Mammary epithelial cell (primary cell): ENCODE measurements at regions of chr4 and their contacts with region 1.

Region 1: DNA sequence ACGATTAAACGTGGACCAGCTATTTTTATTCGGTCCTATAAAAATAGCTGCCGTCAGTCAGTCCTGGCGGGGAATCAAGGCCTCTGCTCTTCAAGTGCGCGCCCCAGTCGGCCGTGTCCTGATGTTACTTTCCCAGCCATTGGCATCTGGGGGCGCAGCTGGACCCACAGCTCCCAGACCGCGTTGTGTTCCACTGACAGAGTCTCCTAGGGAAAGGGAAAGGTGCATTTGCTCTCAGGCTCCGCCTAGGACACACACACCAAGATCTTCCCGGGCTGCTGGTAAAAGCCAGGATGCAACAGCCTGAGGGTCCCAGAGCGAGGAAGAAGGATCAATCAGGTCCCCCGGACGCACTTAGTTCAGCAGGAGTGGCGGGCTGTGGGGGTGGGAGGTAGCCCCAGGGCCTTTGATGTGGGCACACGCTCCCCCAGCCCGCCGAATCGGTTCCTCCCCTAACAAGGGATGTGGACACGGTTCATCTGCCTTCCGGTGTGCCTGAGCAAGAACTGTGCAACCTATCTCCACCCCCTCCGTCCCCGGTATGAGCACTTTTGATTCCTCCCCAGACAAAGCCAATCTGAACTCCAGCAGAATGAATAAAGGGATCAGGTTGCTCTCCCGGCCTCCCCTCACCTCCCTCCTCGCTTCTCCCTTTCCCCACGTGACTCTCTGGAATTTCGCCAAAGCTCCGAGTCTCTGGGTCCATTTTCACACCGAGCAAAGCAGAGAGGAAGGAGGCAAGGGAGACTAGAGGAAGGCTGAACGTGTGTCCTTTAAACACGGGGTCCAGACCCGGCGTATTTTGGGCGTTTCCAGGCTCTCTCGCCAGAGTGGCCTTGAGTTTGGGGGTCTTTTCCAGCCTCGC is 626 bp upstream of the FRAS1 start:
- DNase-seq: peak; percentile 83
- H3K4me3 ChIP-seq: peak overlapping the region; percentile 73 to 81 (median 76)
- H3K27ac ChIP-seq: peak overlapping the region; percentile 34
- H3K4me1 ChIP-seq: peaks cover 6% of the 10 kb centered on the region
- H3K27me3 ChIP-seq: no peaks in the 10 kb centered on the region
- CTCF ChIP-seq: peak in 1 of 2 donors; percentile 8

Region 2: GRCh38 chr4:77852892-77853495 is 203.5 kb before region 1 on chr4:
- CTCF ChIA-PET with region 1: no interaction called
- dilution Hi-C with region 1: no loop called
- in situ Hi-C with region 1: no loop called
- intact Hi-C with region 1: no loop called
- DNase-seq: no peak
- H3K4me3 ChIP-seq: no peak overlapping the region
- H3K27ac ChIP-seq: no peak overlapping the region
- H3K4me1 ChIP-seq: no peaks in the 10 kb centered on the region
- H3K27me3 ChIP-seq: no peaks in the 10 kb centered on the region
- CTCF ChIP-seq: no peak

Region 3: DNA sequence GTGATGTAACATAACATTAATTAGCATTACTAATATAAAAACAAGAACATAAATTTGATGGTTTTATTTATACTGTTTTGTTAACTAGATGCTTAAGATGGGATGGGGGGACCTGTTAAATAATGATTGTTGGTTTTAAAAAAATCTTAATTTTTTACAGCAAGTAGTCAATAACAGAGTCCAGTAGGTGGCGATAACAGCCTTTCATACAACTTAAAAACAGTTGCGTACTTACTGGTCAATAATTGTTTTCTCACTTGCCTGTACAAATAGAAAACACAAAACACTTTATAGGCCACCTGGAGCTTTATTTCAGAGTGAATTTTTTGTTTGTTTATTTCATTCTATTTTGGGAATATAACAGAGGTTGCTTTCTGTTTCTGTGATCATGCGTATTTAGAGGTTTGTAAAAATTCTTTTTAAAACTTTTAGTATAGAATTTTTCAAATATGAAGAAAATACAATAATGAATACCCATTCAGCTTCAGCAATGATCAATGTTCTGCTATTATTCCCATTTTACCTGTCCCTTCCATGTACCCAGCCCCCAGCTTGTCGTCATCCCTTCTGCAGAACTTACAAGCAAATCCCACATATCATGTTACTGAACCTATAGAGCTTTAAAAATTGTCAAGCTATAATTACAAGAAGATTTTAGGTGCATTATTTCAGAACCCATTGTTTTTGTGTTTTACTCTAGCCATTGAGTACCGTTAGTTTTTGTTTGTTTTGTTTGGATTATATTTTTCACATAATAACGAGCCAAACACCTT is 96.7 kb before region 1 on chr4:
- CTCF ChIA-PET with region 1: no interaction called
- dilution Hi-C with region 1: no loop called
- in situ Hi-C with region 1: no loop called
- intact Hi-C with region 1: loop called (anchors 2 kb)
- DNase-seq: peak; percentile 25
- H3K4me3 ChIP-seq: no peak overlapping the region
- H3K27ac ChIP-seq: no peak overlapping the region
- H3K4me1 ChIP-seq: no peaks in the 10 kb centered on the region
- H3K27me3 ChIP-seq: no peaks in the 10 kb centered on the region
- CTCF ChIP-seq: peak; percentile 50 to 58

Region 4: DNA sequence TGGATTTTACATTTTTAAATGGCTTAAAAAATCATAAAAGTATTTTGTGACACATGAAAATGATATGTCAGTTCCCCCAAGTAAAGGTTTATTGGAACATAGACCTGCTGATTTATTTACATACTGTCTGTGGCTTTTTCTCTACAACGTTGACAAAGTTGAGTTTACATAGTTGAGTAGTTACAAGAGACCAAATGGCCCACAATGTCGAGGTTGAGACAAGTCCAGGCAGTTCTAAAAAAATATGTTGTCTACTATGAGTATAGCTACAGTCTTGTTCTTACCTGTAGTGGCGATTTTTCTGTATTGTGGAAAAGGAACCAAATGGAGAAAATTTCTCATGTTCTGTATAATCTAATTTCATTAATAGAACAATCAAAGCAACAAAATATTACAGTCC is 163.8 kb after region 1 on chr4:
- CTCF ChIA-PET with region 1: no interaction called
- dilution Hi-C with region 1: no loop called
- in situ Hi-C with region 1: no loop called
- intact Hi-C with region 1: loop called (anchors 2 kb)
- DNase-seq: peak; percentile 87
- H3K4me3 ChIP-seq: peak overlapping the region in 2 of 3 experiments; percentile 13 to 21
- H3K27ac ChIP-seq: peak overlapping the region; percentile 29
- H3K4me1 ChIP-seq: peaks cover 14% of the 10 kb centered on the region
- H3K27me3 ChIP-seq: no peaks in the 10 kb centered on the region
- CTCF ChIP-seq: no peak

Region 5: DNA sequence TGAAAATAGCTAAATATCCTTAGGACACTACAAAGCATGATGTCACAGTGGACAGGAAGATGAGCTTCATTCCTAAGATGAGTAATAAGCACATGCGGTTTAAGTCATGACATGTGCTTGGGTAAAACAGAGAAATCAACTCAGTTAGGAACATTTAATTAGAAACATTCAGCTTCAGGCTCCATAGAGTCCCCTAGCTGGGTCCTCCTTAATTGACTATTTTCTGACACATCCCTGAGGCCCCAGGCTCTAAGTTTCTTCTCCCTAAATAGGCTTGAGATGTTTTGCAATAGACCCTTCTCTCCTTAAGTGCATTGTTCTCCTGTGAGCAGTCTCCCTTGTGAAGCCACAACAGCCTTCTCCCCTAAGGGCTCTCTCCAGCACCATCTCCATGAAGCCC is 424.7 kb after region 1 on chr4:
- CTCF ChIA-PET with region 1: interaction called, 4 read pairs
- dilution Hi-C with region 1: no loop called
- in situ Hi-C with region 1: no loop called
- intact Hi-C with region 1: loop called (anchors 1 kb)
- DNase-seq: peak; percentile 75
- H3K4me3 ChIP-seq: no peak overlapping the region
- H3K27ac ChIP-seq: peak overlapping the region; percentile 67
- H3K4me1 ChIP-seq: peaks cover 30% of the 10 kb centered on the region
- H3K27me3 ChIP-seq: no peaks in the 10 kb centered on the region
- CTCF ChIP-seq: no peak

Region 6: DNA sequence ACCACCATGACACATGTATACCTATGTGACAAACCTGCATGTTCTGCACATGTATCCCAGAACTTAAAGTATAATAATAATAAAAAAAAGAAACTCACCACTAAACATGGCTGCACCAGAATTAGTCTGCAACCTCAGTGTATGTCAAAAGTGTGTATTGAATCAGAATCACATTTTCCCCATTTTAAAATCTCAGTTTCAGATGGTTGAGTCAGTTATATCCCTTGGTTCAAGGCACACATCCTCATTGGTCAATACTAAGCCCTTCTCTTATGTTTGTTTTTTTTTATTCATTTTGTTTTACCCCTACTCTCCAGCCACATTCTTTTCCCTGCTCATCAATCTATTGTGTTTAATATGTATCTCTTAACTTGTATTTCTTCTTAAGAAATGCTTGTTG is 437.2 kb after region 1 on chr4:
- CTCF ChIA-PET with region 1: no interaction called
- dilution Hi-C with region 1: no loop called
- in situ Hi-C with region 1: no loop called
- intact Hi-C with region 1: no loop called
- DNase-seq: no peak
- H3K4me3 ChIP-seq: no peak overlapping the region
- H3K27ac ChIP-seq: no peak overlapping the region
- H3K4me1 ChIP-seq: no peaks in the 10 kb centered on the region
- H3K27me3 ChIP-seq: no peaks in the 10 kb centered on the region
- CTCF ChIP-seq: no peak

Region 7: GRCh38 chr4:78569291-78569821 is 512.9 kb after region 1 on chr4:
- CTCF ChIA-PET with region 1: interaction called, 5 read pairs
- dilution Hi-C with region 1: no loop called
- in situ Hi-C with region 1: no loop called
- intact Hi-C with region 1: loop called (anchors 2 kb)
- DNase-seq: peak; percentile 71
- H3K4me3 ChIP-seq: no peak overlapping the region
- H3K27ac ChIP-seq: peak overlapping the region; percentile 97
- H3K4me1 ChIP-seq: peaks cover 62% of the 10 kb centered on the region
- H3K27me3 ChIP-seq: no peaks in the 10 kb centered on the region
- CTCF ChIP-seq: no peak